Heart left ventricle (tissue), 16 donors: ENCODE measurements at regions of chr20 and their contacts with region 1.

Region 1: GRCh38 chr20:62285722-62286121 is 17.1 kb upstream of the ADRM1 start:
- DNase-seq: peak in 4 of 5 donors; percentile 46 to 76 (median 66)
- ATAC-seq: peak in 3 of 4 donors; percentile 16 to 77 (median 35)
- H3K4me3 ChIP-seq: no peak overlapping the region
- H3K27ac ChIP-seq: peak overlapping the region in 11 of 12 donors; percentile 50 to 85 (median 79)
- H3K4me1 ChIP-seq: peaks cover 0 to 48% (median 33%) of the 10 kb centered on the region in 12 donors
- H3K27me3 ChIP-seq: no peaks in the 10 kb centered on the region
- CTCF ChIP-seq: no peak
- POLR2A ChIP-seq: no peak

Region 2: DNA sequence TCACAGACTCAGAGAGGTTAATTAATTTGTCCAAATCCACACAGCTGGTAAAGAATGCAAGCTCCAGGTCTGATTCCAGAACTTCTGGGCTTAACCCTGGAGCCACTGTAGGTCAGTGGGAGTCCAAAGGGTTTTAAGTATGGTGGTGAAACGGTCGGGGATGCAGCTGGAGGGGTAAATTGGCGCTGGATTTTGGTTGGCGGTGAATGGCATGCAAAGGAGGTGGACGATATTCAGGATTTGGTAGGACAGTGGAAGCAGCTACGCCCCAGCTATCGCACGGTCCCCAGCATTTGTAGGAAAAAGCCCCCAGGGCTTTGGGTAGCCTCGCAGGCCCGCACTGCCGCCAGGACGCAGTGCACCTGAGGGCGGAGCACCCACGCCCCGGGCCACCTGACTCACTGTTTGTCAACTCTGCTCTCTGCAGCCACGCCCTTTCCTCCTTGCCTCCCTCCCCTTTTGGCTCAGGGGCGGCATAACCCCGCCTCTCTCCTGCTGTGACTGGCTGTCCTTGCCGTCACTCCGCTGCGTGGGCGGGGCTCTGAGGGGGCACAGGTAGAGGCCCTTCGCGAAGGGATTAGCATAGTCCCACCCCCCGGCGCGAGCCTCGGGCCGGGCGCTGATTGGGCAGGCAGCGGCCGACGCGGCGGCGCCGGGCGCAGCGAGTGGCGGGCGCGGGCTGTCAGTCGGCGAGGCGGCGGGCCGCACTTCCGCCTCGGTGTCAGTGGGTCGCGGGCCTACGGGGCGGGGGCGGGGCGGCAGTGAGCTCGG is 47.7 kb before region 1 on chr20 and contains the start of gene OSBPL2:
- intact Hi-C with region 1: loop called in 1 of 10 experiments (anchors 5 kb)
- DNase-seq: peak; percentile 97 to 100 (median 99)
- ATAC-seq: peak; percentile 97 to 98 (median 98)
- H3K4me3 ChIP-seq: peak within 1 kb of the TSS; percentile 63 to 96 (median 79)
- H3K27ac ChIP-seq: peak within 1 kb of the TSS; percentile 47 to 97 (median 86)
- H3K4me1 ChIP-seq: peaks cover 6 to 82% (median 45%) of the 10 kb centered on the region in 12 donors
- H3K27me3 ChIP-seq: no peaks in the 10 kb centered on the region
- CTCF ChIP-seq: no peak
- POLR2A ChIP-seq: peak; percentile 31 to 46
- total RNA-seq, gene OSBPL2: 20.7 to 57.9 (median 40.3) TPM

Region 3: GRCh38 chr20:62246872-62247665 is 38.7 kb before region 1 on chr20:
- intact Hi-C with region 1: loop called in 2 of 10 experiments (anchors 2 to 5 kb)
- DNase-seq: peak in 4 of 5 donors; percentile 61 to 85 (median 74)
- ATAC-seq: peak; percentile 75 to 88 (median 84)
- H3K4me3 ChIP-seq: no peak overlapping the region
- H3K27ac ChIP-seq: peak overlapping the region in 11 of 12 donors; percentile 24 to 86 (median 62)
- H3K4me1 ChIP-seq: peaks cover 0 to 81% (median 52%) of the 10 kb centered on the region in 12 donors
- H3K27me3 ChIP-seq: no peaks in the 10 kb centered on the region
- CTCF ChIP-seq: no peak
- POLR2A ChIP-seq: no peak